PC-3 (cell line): ENCODE measurements at regions of chr21 and their contacts with region 1.

Region 1: GRCh38 chr21:41816220-41817165 is 49.6 kb upstream of the RIPK4 start:
- DNase-seq: peak; percentile 67
- ATAC-seq: peak; percentile 86
- H3K4me3 ChIP-seq: no peak overlapping the region
- H3K27ac ChIP-seq: peak overlapping the region; percentile 61
- H3K4me1 ChIP-seq: peaks cover 13% of the 10 kb centered on the region
- H3K27me3 ChIP-seq: no peaks in the 10 kb centered on the region
- CTCF ChIP-seq: peak; percentile 83

Region 2: DNA sequence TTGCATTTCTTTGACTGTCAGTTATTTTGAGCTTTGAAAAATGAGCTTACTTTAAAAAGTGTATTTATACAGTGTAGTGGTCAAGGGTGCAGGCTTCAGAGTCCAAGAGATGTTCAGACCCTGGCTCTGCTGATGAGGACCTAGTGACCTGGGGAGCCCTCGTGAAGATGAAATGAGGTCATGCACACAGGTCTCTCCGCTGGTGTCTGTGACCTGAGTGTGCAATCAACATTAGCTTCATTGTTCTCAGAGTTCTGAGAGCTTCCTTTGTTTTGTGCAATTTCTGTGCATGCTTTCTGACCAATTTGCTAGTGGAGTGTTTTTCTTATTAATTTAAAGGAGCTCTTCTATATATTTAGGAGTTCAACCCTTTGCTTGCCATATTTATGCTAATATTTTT is 121.0 kb before region 1 on chr21:
- CTCF ChIA-PET with region 1: no interaction called
- POLR2A ChIA-PET with region 1: no interaction called
- intact Hi-C with region 1: no loop called
- DNase-seq: no peak
- ATAC-seq: no peak
- H3K4me3 ChIP-seq: no peak overlapping the region
- H3K27ac ChIP-seq: no peak overlapping the region
- H3K4me1 ChIP-seq: no peaks in the 10 kb centered on the region
- H3K27me3 ChIP-seq: no peaks in the 10 kb centered on the region
- CTCF ChIP-seq: no peak

Region 3: DNA sequence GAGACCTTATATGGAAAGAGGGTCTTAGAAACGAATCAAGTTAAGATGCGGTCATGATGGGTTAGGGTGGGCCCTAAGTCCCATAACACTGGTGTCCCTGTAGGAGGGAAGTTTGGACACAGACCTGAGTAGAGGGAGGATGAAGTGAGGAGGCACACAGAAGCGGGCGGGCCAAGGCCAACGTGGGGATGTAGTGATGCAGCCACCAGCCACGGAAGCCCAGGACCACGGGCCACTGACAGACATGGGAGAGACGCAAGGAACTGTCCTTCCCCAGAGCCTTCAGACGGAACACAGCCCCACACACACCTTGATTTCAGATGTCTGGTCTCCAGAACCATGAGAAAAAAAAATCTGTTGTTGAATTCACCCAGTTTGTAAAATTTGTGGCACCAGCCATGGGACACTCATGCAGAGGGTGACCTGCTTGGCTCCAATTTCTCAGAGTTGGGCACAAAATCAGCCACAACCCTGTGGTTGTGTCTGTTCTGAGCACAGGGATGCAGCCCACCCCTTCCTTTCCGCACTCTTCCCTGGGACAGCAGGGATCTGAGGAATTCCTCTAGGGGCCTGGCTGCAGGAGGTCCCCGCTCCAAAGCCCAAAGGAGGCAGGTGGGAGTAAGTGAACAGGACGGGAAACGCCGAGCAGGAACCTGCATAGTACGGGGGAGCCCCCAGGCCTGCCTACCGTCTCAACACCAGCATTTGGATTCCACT is 110.8 kb before region 1 on chr21:
- CTCF ChIA-PET with region 1: no interaction called
- POLR2A ChIA-PET with region 1: no interaction called
- intact Hi-C with region 1: no loop called
- DNase-seq: no peak
- ATAC-seq: no peak
- H3K4me3 ChIP-seq: no peak overlapping the region
- H3K27ac ChIP-seq: peak overlapping the region; percentile 97
- H3K4me1 ChIP-seq: peaks cover 52% of the 10 kb centered on the region
- H3K27me3 ChIP-seq: no peaks in the 10 kb centered on the region
- CTCF ChIP-seq: no peak

Region 4: GRCh38 chr21:41783441-41784161 is 32.9 kb before region 1 on chr21:
- CTCF ChIA-PET with region 1: interaction called, 16 read pairs
- POLR2A ChIA-PET with region 1: no interaction called
- intact Hi-C with region 1: loop called (anchors 1 kb)
- DNase-seq: peak; percentile 100
- ATAC-seq: peak; percentile 66
- H3K4me3 ChIP-seq: peak overlapping the region; percentile 8; the same call in 1 of the 2 replicates
- H3K27ac ChIP-seq: peak overlapping the region; percentile 97
- H3K4me1 ChIP-seq: peaks cover 89% of the 10 kb centered on the region
- H3K27me3 ChIP-seq: no peaks in the 10 kb centered on the region
- CTCF ChIP-seq: no peak

Region 5: GRCh38 chr21:41879190-41879998 is 62.9 kb after region 1 on chr21 and contains the start of gene PRDM15:
- CTCF ChIA-PET with region 1: no interaction called
- POLR2A ChIA-PET with region 1: no interaction called
- intact Hi-C with region 1: no loop called
- DNase-seq: peak; percentile 75
- ATAC-seq: peak; percentile 74
- H3K4me3 ChIP-seq: peak within 1 kb of the TSS; percentile 74
- H3K27ac ChIP-seq: peak within 1 kb of the TSS; percentile 72
- H3K4me1 ChIP-seq: peaks cover 20% of the 10 kb centered on the region
- H3K27me3 ChIP-seq: no peaks in the 10 kb centered on the region
- CTCF ChIP-seq: no peak
- total RNA-seq, gene PRDM15: 13.4 and 16.8 TPM in 2 replicates

Region 6: GRCh38 chr21:41921021-41921420 is 104.5 kb after region 1 on chr21:
- CTCF ChIA-PET with region 1: no interaction called
- POLR2A ChIA-PET with region 1: no interaction called
- intact Hi-C with region 1: no loop called
- DNase-seq: no peak
- ATAC-seq: no peak
- H3K4me3 ChIP-seq: no peak overlapping the region
- H3K27ac ChIP-seq: no peak overlapping the region
- H3K4me1 ChIP-seq: peaks cover 2% of the 10 kb centered on the region
- H3K27me3 ChIP-seq: no peaks in the 10 kb centered on the region
- CTCF ChIP-seq: no peak